Panc1 (cell line): ENCODE measurements at regions of chr11 and their contacts with region 1.

Region 1: DNA sequence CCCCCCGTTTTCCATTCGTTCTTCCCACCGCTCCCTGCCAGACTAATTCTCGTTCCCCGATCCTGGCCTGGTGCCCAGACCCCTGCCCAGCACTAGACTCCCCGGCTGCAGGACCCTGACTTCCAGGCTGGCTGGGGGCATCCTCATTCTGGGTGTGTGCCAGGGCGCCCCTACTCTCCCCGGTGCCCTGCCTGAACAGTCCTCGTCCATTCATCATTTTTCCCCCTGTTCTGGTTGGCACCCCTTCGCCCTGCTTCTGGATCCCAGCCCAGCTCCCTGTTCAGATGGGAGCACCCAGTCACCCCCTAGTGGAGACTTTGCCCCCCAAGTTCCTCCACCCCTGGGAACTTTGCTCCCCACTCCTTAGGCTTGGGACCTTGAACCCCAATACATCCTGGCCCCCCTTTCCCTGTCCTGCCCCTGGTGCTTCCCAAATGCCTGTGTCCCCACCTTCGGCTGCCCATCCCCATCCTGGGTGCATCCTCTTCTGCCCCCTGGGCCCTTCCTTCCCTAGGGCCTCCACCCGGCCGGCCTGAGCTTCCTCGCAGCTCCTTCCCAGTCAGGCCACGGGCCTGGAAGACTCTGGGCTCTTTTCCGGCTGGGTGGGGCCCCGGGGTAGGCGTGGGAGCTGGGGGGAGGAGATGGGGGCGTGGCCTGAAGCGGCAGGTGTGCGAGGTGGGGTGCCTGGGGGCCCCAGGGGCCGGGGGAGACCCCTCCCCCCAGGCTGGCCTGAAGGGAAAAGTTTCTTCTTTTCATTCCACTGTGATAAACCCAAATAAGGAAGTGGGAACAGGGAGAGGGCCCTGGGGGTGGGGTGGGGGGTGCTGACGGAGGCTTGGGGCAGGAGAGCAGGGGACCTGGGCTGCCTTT is 908 bp downstream of the PLCB3 start:
- DNase-seq: no peak
- ATAC-seq: peak; percentile 50
- H3K4me3 ChIP-seq: peak overlapping the region; percentile 84 to 90
- H3K27ac ChIP-seq: peak overlapping the region; percentile 89
- H3K4me1 ChIP-seq: peaks cover 41% of the 10 kb centered on the region
- H3K27me3 ChIP-seq: no peaks in the 10 kb centered on the region
- CTCF ChIP-seq: no peak

Region 2: GRCh38 chr11:64268053-64268688 is 15.9 kb after region 1 on chr11:
- CTCF ChIA-PET with region 1: interaction called, 12 read pairs
- POLR2A ChIA-PET with region 1: interaction called, 6 read pairs
- in situ Hi-C with region 1: no loop called
- intact Hi-C with region 1: no loop called
- DNase-seq: no peak
- ATAC-seq: no peak
- H3K4me3 ChIP-seq: peak overlapping the region in 1 of 2 experiments; percentile 67; a peak in 1 of 4 replicates
- H3K27ac ChIP-seq: peak overlapping the region; percentile 98
- H3K4me1 ChIP-seq: peaks cover 13% of the 10 kb centered on the region
- H3K27me3 ChIP-seq: no peaks in the 10 kb centered on the region
- CTCF ChIP-seq: no peak

Region 3: DNA sequence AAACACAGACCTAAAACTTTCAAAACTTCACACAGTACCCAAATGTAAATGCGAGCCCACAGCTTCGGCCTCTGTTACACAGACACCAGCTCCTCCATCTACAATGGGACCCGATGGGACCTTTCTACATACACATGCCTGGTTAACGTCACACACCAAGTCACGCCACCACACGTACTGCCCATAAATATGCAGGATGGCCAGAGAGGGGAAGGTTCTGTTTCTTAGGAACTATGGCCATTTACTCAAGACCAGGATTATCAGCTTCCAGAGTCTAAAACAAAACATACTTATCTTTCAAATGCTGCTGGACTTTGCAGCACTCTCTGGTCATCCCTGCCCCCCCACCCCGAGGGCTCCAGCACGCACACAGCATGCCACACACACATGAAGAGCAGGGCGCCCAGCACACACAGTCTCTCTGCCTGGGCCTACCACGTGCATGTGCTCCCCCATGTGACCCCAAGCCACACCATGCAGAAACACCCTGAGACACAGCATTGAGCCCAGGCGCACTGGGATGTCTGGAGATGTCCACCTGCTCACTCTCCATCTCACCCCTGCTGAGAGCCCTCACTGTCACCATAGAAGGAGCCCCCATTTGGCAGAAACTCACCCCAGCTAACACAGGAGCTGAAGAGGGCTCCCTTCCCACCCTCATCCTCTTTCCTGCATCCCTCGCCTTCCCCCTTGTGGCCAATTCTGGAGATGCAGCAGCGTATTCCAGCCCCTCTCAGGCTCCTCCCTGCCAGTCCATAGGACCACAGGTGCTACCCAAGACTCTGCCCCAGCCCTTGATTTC is 400.5 kb after region 1 on chr11:
- CTCF ChIA-PET with region 1: no interaction called
- POLR2A ChIA-PET with region 1: no interaction called
- in situ Hi-C with region 1: no loop called
- intact Hi-C with region 1: no loop called
- DNase-seq: peak; percentile 58
- ATAC-seq: peak; percentile 90
- H3K4me3 ChIP-seq: no peak overlapping the region
- H3K27ac ChIP-seq: no peak overlapping the region
- H3K4me1 ChIP-seq: no peaks in the 10 kb centered on the region
- H3K27me3 ChIP-seq: no peaks in the 10 kb centered on the region
- CTCF ChIP-seq: peak; percentile 98